WTC11 (cell line): ENCODE measurements at regions of chr16 and their contacts with region 1.

Region 1: DNA sequence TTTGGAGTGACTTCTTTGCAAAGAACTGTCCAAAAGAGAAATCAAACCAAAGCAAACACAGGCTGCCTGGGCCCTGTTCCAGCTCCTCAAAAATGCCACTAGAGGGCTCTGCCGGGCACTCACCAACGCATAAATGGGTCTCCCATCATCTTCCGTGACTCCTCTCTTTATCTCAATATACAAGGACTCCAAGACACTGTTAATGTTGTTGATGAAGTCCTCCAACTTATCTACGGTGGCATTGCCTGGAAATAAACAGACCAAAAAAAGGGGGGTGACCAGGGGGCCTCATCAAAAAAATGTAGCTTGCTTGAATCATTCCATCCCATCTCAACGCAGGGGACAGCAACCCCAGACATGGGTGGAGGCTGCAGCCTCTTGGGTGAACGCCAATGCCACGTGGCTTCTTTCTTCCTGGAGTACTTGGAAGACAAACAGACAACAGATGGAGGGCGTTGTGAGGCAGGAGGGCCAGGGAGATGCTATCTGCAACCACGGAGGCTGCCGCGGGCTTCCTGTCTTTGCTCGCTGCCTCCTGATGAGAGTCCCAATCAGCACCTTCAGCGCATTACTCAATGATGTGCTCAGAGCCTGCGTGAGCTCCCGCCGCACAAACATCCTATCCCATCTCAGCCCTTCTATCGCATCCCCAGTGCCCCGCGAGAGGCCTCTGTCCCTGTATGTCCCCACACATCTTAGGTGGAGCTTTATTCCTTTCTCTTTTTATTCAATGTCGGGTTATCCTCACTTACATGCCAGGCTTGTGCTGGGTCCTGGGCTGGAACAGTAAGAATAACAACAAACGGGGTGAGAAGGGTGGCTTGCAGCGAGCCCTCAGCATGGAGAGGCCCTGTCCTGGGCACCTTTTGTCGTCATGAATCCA is 32.0 kb downstream of the KDM8 start:
- DNase-seq: peak; percentile 46
- ATAC-seq: peak; percentile 69
- H3K4me3 Mint-ChIP-seq: no peak overlapping the region
- H3K27ac Mint-ChIP-seq: no peak overlapping the region
- H3K4me1 Mint-ChIP-seq: peaks cover 26% of the 10 kb centered on the region
- H3K27me3 Mint-ChIP-seq: no peaks in the 10 kb centered on the region
- CTCF ChIP-seq: peak; percentile 43; the same call in 1 of the 2 replicates

Region 2: GRCh38 chr16:27169511-27170071 is 65.7 kb before region 1 on chr16:
- CTCF ChIA-PET with region 1: no interaction called
- POLR2A ChIA-PET with region 1: no interaction called
- DNase-seq: no peak
- ATAC-seq: peak; percentile 69
- H3K4me3 Mint-ChIP-seq: no peak overlapping the region
- H3K27ac Mint-ChIP-seq: no peak overlapping the region
- H3K4me1 Mint-ChIP-seq: no peaks in the 10 kb centered on the region
- H3K27me3 Mint-ChIP-seq: peaks cover 10% of the 10 kb centered on the region
- CTCF ChIP-seq: no peak

Region 3: DNA sequence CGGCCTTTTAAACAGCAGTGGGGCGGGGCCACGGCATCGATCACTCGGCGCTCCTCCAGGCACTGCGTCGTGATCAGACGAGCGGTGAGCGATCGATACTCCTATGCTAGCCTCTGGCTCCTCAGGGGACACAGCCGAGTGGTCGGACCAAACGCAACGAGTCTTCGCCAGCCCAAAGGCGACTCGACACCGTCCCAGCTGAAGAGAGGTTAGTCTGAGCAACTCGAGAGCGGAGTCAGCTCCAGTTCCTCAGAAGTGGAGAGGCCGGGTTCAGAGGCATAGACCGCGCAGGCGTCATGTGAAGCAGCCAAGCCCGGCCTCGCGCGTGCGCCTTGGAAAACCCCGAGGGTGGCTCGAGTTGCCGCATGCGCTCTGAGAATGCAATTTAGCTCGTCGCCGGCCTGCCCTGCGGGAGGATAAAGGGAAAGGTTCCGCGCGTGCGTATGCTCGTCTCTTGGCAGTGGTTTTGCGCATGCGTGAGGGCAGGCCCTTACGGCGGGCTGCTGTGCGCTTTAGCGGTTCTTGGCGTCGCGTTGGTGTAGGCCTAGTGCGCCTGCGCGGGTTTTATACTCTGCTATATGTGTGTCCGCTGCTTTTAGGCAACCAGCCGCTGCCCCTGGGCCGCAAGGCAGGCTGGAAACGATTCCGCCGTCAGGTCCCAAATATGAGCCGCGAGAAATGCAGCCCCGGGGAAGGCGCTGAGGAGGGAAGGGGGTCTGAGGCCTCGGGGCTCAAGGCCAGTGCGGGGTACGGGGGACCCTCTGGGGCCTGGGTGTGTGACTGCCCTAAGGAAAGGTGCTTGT is 31.7 kb before region 1 on chr16 and contains the start of gene KDM8:
- CTCF ChIA-PET with region 1: no interaction called
- POLR2A ChIA-PET with region 1: no interaction called
- DNase-seq: peak; percentile 97
- ATAC-seq: peak; percentile 90
- H3K4me3 Mint-ChIP-seq: peak within 1 kb of the TSS; percentile 96
- H3K27ac Mint-ChIP-seq: peak within 1 kb of the TSS; percentile 100
- H3K4me1 Mint-ChIP-seq: peaks cover 18% of the 10 kb centered on the region
- H3K27me3 Mint-ChIP-seq: no peaks in the 10 kb centered on the region; the same call in none of the 2 replicates
- CTCF ChIP-seq: no peak
- total RNA-seq, gene KDM8: 10.9 to 16.5 TPM (median 11.7 TPM) in 3 replicates

Region 4: DNA sequence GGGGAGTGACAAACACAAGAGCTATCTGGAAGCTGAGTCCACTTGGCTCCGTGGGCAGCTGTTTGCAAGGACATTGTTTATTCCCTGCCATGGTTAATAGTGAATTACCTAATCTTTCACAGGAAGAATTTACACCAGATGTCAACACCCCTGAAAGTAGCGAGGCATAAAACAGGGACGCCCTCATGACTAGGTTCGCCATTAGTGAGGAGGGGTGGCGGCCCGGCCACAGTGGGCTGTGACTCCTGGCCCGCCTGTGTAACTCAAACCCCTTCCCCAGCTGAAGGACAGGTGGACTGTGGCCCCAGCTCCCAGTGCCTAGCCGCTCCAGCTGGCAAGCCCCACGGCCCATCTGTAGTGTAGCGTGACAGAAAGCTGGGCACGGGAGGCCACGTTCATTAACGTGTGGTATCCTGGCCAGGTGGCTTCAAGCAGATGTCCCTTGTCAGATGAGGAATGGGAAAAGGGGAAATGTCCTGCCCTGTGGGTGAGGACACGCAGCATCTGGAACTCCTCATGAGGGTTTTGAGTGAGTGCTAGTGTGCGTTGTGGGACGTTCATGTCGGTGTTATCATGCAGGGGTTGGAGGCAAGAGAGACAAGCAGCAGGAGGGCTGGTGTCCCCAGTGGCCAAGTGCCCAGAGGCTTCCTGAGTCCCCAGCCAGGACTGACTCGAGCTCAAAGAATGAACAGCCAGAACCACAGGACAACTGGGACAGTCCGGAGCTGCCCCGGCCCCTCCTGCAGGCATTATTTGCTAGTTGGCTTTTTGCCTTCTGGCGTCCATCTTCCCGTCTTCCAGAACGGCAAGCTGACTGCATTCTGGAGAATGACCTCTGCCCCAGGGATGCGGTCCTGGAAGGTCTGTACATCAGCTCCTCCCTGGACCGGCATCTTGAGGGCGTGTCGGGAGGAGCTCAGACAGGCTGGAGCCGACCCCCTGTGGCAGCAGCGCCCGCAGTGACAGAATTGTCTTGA is 12.8 kb before region 1 on chr16:
- CTCF ChIA-PET with region 1: interaction called, 28 read pairs
- POLR2A ChIA-PET with region 1: no interaction called
- DNase-seq: no peak
- ATAC-seq: no peak
- H3K4me3 Mint-ChIP-seq: no peak overlapping the region
- H3K27ac Mint-ChIP-seq: peak overlapping the region; percentile 15; the same call in 1 of the 2 replicates
- H3K4me1 Mint-ChIP-seq: no peaks in the 10 kb centered on the region
- H3K27me3 Mint-ChIP-seq: no peaks in the 10 kb centered on the region
- CTCF ChIP-seq: no peak

Region 5: GRCh38 chr16:27286451-27286850 is 51.2 kb after region 1 on chr16:
- CTCF ChIA-PET with region 1: no interaction called
- POLR2A ChIA-PET with region 1: no interaction called
- DNase-seq: no peak
- ATAC-seq: no peak
- H3K4me3 Mint-ChIP-seq: no peak overlapping the region
- H3K27ac Mint-ChIP-seq: no peak overlapping the region
- H3K4me1 Mint-ChIP-seq: peaks cover 3% of the 10 kb centered on the region
- H3K27me3 Mint-ChIP-seq: no peaks in the 10 kb centered on the region
- CTCF ChIP-seq: no peak

Region 6: DNA sequence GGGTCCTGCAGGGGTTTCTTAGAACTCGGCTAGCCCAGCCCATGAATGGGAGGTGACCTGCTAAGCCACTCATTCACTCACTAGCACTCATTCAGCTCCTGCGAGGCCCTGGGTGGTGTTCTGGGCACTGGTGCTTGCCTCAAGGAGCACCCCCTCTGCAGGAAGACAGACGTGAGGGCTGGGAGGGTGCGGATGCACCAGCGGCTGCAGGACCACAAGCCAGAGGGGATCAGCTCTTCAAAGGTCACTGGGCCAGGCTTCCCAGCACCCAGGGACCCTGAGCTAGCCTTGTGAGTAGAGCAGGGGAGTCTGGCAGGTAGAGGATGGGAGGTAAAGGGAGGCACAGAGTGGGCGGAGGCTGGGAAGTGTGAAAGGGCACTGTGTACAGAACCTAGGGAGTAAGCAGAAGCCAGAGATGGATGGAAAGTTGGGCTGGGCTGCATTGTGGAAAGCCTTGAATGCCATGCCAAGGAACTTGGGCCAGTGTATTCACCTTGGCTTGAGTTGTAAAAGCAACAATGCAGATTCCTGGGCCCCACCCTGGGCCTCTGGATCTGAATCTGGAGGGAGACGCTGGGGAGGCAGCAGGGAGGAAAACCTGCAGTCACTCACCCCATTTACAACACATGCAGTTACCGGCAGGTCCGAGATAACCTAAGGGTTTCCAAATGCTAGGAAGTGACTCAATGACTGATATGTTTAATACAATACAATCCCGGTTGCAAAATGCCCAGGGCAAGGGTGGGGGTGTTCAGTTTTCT is 80.2 kb after region 1 on chr16:
- CTCF ChIA-PET with region 1: interaction called, 13 read pairs
- POLR2A ChIA-PET with region 1: no interaction called
- DNase-seq: peak; percentile 19
- ATAC-seq: peak; percentile 11; the same call in 1 of the 2 replicates
- H3K4me3 Mint-ChIP-seq: peak overlapping the region; percentile 81
- H3K27ac Mint-ChIP-seq: no peak overlapping the region; the same call in 1 of the 2 replicates
- H3K4me1 Mint-ChIP-seq: peaks cover 42% of the 10 kb centered on the region
- H3K27me3 Mint-ChIP-seq: peaks cover 3% of the 10 kb centered on the region; the same call in 1 of the 2 replicates
- CTCF ChIP-seq: no peak

Region 7: GRCh38 chr16:27355610-27356009 is 120.3 kb after region 1 on chr16:
- CTCF ChIA-PET with region 1: interaction called, 39 read pairs
- POLR2A ChIA-PET with region 1: no interaction called
- DNase-seq: peak; percentile 80
- ATAC-seq: peak; percentile 96
- H3K4me3 Mint-ChIP-seq: no peak overlapping the region
- H3K27ac Mint-ChIP-seq: no peak overlapping the region; the same call in 1 of the 2 replicates
- H3K4me1 Mint-ChIP-seq: peaks cover 3% of the 10 kb centered on the region; the same call in 1 of the 2 replicates
- H3K27me3 Mint-ChIP-seq: no peaks in the 10 kb centered on the region
- CTCF ChIP-seq: no peak

Region 8: GRCh38 chr16:27374804-27375425 is 139.6 kb after region 1 on chr16:
- CTCF ChIA-PET with region 1: interaction called, 13 read pairs
- POLR2A ChIA-PET with region 1: no interaction called
- DNase-seq: peak; percentile 93
- ATAC-seq: peak; percentile 100
- H3K4me3 Mint-ChIP-seq: no peak overlapping the region
- H3K27ac Mint-ChIP-seq: no peak overlapping the region
- H3K4me1 Mint-ChIP-seq: no peaks in the 10 kb centered on the region
- H3K27me3 Mint-ChIP-seq: no peaks in the 10 kb centered on the region; the same call in 1 of the 2 replicates
- CTCF ChIP-seq: peak; percentile 32; the same call in 1 of the 2 replicates